Activated CD4-positive, alpha-beta T cell treated with anti-CD3 and anti-CD28 coated beads, Interleukin-2, amount 10 ng/mL, durations not matched to agents 24 days and 14 days (primary cell): ENCODE measurements at regions of chr3 and their contacts with region 1.

Region 1: GRCh38 chr3:106609666-106610301 is 741.0 kb upstream of the CBLB start:
- DNase-seq: peak; percentile 90
- H3K4me3 Mint-ChIP-seq: no peak overlapping the region
- H3K27ac Mint-ChIP-seq: peak overlapping the region; percentile 83
- H3K4me1 Mint-ChIP-seq: peaks cover 24% of the 10 kb centered on the region
- H3K27me3 Mint-ChIP-seq: no peaks in the 10 kb centered on the region

Region 2: DNA sequence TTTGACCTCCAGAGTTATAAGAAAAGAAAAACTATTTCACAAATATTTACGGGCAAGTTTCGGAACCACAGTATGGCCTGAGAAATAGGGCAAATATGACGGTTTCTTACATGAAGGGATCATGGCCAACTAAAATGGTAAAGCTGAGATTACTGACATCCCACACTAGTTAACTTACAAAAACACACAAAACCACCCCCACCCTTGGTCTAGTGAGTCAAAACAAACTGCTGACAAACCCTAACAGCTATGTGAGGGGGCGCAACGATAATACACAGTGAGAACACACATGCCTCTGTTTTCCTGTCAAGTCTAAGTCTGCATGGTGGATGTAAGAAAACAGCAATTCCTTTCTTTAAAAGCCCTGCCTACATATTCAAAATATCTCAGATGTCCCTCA is 773.3 kb before region 1 on chr3:
- intact Hi-C with region 1: loop called (anchors 10 kb)
- DNase-seq: peak; percentile 68
- H3K4me3 Mint-ChIP-seq: peak overlapping the region; percentile 59
- H3K27ac Mint-ChIP-seq: peak overlapping the region; percentile 90
- H3K4me1 Mint-ChIP-seq: peaks cover 60% of the 10 kb centered on the region
- H3K27me3 Mint-ChIP-seq: no peaks in the 10 kb centered on the region

Region 3: GRCh38 chr3:106473576-106474475 is 136.0 kb before region 1 on chr3:
- intact Hi-C with region 1: loop called (anchors 1 kb)
- DNase-seq: no peak
- H3K4me3 Mint-ChIP-seq: no peak overlapping the region
- H3K27ac Mint-ChIP-seq: peak overlapping the region; percentile 83
- H3K4me1 Mint-ChIP-seq: peaks cover 8% of the 10 kb centered on the region
- H3K27me3 Mint-ChIP-seq: no peaks in the 10 kb centered on the region

Region 4: DNA sequence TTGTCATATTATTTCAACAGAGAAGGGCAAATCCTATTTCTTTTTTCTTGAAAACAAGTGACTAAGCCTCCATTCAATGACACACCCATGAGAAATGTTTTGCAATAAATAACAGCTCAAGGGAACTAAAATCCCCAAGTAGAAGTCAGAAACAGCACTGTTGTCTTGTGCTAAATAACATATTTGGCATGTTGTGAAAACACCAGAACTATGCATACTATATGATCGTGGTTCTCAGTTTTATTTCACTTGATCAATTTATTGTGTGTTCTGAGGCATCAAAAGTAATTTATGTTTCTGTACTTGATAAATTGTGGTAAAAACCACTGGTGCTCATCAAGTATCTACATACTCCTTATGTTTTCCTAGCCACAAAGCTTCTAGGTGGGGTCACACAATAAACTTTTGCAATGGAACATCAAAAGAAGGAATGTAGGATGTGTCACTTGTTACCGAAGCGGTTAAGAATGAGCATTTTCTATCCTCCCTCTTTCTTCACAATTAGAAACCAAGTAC is 49.3 kb before region 1 on chr3:
- intact Hi-C with region 1: loop called (anchors 1 kb)
- DNase-seq: no peak
- H3K4me3 Mint-ChIP-seq: no peak overlapping the region
- H3K27ac Mint-ChIP-seq: peak overlapping the region; percentile 58
- H3K4me1 Mint-ChIP-seq: peaks cover 4% of the 10 kb centered on the region
- H3K27me3 Mint-ChIP-seq: no peaks in the 10 kb centered on the region

Region 5: GRCh38 chr3:106699122-106699521 is 89.3 kb after region 1 on chr3:
- intact Hi-C with region 1: no loop called
- DNase-seq: no peak
- H3K4me3 Mint-ChIP-seq: no peak overlapping the region
- H3K27ac Mint-ChIP-seq: no peak overlapping the region
- H3K4me1 Mint-ChIP-seq: no peaks in the 10 kb centered on the region
- H3K27me3 Mint-ChIP-seq: no peaks in the 10 kb centered on the region